ENCODE measurements at regions of chr6 and their contacts with region 1.

Region 1: DNA sequence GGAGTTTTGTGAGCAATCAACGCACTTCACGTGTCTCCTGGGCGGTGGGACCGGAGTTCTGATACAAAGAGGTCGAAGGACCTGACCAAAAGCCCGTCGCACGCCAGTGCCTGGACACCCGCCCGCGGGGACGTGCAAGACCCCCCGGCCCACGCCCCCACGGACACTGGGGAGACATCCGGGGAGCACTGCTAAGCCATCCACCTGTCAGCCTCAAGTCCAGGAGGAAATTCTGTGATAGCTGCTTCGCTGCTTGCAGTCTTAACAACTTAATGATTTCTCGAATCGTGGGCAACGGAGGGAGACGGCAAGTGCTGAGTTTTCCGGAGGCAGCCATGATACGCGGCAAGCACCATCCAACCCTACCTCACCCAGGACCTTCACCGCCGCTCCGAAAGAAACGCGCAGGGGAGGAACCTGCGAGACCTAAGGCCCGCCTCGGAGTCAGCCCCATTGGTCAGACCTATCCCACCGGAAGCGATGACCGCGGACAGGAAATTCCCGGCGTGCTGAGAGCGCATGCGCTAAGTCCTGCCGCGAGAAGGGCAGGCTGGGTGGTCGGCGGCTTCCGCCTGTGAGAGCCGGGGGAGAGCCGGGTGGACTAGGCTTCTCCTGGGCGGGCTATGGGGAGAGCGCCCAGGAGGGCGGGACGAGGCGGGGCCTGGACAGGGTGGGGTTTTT is at the start of gene TFB1M:
- DNase-seq: peak; percentile 99
- ATAC-seq: peak; percentile 99
- total RNA-seq, gene TFB1M: 17.9 TPM

Region 2: DNA sequence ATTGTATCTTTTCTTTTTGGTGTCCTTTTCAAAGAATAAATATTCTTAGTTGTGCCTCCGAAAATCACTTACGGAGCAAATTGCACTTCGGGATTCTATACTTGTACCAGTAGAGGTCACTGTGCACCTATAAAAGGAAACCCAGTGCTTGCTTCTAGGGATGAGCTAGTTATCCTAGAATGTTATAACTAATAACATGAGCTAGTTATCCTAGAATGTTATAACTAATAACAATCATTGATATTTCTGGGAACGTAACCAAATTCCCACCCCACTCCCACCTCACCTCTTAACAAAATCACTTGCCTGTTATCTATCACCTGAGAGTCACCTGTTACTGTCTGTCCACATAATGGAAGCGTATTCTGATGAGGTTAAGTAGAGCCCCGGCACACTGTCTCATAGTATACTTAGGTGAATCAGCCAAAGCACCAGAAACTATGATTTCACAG is 446.1 kb before region 1 on chr6:
- intact Hi-C with region 1: loop called (anchors 10 kb)
- DNase-seq: no peak
- ATAC-seq: no peak

Region 3: GRCh38 chr6:155253337-155253736 is 60.9 kb before region 1 on chr6:
- intact Hi-C with region 1: loop called (anchors 1 kb)
- DNase-seq: no peak
- ATAC-seq: peak; percentile 27

Region 4: DNA sequence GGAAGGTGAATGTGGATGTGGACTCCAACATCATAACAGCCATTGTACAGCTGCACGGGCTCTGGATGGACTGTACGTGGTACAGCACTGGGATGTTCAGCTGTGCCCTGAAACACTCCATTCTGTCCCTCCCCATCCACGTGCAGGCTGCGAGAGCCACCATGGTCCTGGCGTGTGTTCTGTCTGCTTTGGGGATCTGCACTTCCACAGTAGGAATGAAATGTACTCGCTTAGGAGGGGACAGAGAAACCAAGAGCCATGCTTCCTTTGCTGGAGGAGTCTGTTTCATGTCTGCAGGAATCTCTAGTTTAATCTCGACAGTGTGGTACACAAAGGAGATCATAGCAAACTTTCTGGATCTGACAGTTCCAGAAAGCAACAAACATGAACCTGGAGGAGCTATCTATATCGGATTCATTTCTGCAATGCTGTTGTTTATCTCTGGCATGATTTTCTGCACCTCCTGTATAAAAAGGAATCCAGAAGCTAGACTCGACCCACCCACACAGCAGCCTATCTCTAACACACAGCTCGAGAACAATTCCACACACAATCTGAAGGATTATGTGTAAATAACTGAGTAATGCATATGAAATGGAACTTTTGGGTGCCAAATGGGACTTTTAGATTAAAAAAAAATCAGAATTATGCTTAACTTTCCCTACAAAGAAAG is 38.3 kb before region 1 on chr6:
- intact Hi-C with region 1: loop called (anchors 5 kb)
- DNase-seq: peak; percentile 62
- ATAC-seq: peak; percentile 75